ENCODE measurements at regions of chr7 and their contacts with region 1.

Region 1: DNA sequence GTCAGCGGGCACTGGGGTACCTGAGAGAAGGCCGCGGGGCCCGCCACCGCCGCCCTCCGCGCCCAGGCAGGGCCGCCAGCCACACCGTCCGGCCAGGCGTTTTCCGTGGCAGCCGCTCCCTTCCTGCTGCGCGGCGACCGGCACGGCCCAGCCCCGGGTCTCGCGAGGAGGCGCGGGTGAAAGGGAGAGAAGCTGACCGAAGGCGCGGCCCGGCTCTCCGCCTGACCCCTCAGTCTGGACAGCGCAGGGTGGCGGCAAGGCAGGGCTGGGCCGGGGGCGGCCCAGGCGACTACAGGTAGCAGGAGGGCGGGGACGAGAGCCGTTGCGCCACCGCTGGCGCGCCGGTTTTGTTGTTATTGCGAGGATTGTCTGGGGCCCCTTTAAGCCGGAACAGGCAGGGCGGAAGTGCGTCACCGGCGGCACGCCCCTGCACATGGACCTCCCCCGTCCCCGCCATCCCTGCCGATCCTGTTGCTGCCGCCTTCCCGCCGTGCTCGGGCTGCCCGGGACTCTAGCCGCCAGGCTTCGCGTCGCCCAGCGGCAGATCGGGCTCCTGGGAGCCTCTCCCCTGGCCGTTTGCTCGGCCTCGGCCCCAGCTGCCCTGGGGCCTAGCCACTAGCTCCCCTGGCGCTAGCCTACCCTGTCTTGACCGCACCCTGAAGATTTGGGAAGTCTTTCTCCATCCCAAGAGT is at the start of gene HERPUD2:
- H3K4me3 ChIP-seq: peak within 1 kb of the TSS; percentile 90
- H3K27ac ChIP-seq: peak within 1 kb of the TSS; percentile 78
- H3K4me1 ChIP-seq: no peaks in the 10 kb centered on the region
- CTCF ChIP-seq: peak; percentile 69

Region 2: GRCh38 chr7:35707422-35707821 is 12.5 kb after region 1 on chr7:
- CTCF ChIA-PET with region 1: interaction called, 17 read pairs
- POLR2A ChIA-PET with region 1: interaction called, 4 read pairs
- H3K4me3 ChIP-seq: no peak overlapping the region
- H3K27ac ChIP-seq: no peak overlapping the region
- H3K4me1 ChIP-seq: no peaks in the 10 kb centered on the region
- CTCF ChIP-seq: no peak

Region 3: GRCh38 chr7:35758421-35758820 is 63.5 kb after region 1 on chr7:
- CTCF ChIA-PET with region 1: no interaction called
- POLR2A ChIA-PET with region 1: no interaction called
- H3K4me3 ChIP-seq: no peak overlapping the region
- H3K27ac ChIP-seq: no peak overlapping the region
- H3K4me1 ChIP-seq: peaks cover 10% of the 10 kb centered on the region
- CTCF ChIP-seq: no peak

Measured in HEK293 (cell line).